CD4-positive, alpha-beta T cell (primary cell): ENCODE measurements at regions of chr5 and their contacts with region 1.

Region 1: GRCh38 chr5:172714491-172715421 is 56.2 kb downstream of the DUSP1 start:
- DNase-seq: peak; percentile 44 to 85 (median 62)
- ATAC-seq: peak; percentile 80
- H3K4me3 ChIP-seq: no peak overlapping the region
- H3K4me3 Mint-ChIP-seq: no peak overlapping the region
- H3K27ac ChIP-seq: no peak overlapping the region
- H3K27ac Mint-ChIP-seq: no peak overlapping the region
- H3K4me1 ChIP-seq: peaks cover 29% of the 10 kb centered on the region
- H3K4me1 Mint-ChIP-seq: peaks cover 8% of the 10 kb centered on the region
- H3K27me3 ChIP-seq: no peaks in the 10 kb centered on the region
- H3K27me3 Mint-ChIP-seq: peaks cover 5% of the 10 kb centered on the region
- CTCF ChIP-seq: peak; percentile 81

Region 2: GRCh38 chr5:172770675-172771438 is 56.1 kb after region 1 on chr5 and contains the start of gene DUSP1:
- CTCF ChIA-PET with region 1: interaction called, 38 read pairs
- POLR2A ChIA-PET with region 1: interaction called, 49 read pairs
- intact Hi-C with region 1: loop called (anchors 1 to 2 kb)
- DNase-seq: peak; percentile 96 to 100 (median 98)
- ATAC-seq: peak; percentile 45
- H3K4me3 ChIP-seq: peak within 1 kb of the TSS; percentile 95
- H3K4me3 Mint-ChIP-seq: peak within 1 kb of the TSS; percentile 99
- H3K27ac ChIP-seq: peak within 1 kb of the TSS; percentile 100
- H3K27ac Mint-ChIP-seq: peak within 1 kb of the TSS; percentile 95
- H3K4me1 ChIP-seq: peaks cover 87% of the 10 kb centered on the region
- H3K4me1 Mint-ChIP-seq: peaks cover 78% of the 10 kb centered on the region
- H3K27me3 ChIP-seq: no peaks in the 10 kb centered on the region
- H3K27me3 Mint-ChIP-seq: peaks cover 6% of the 10 kb centered on the region
- CTCF ChIP-seq: peak; percentile 33
- total RNA-seq, gene DUSP1: 761 to 768 TPM

Region 3: GRCh38 chr5:172833686-172834414 is 119.1 kb after region 1 on chr5 and contains the start of gene ERGIC1:
- CTCF ChIA-PET with region 1: interaction called, 4 read pairs
- POLR2A ChIA-PET with region 1: no interaction called
- intact Hi-C with region 1: loop called (anchors 5 kb)
- DNase-seq: peak; percentile 17 to 83 (median 52)
- ATAC-seq: peak; percentile 66
- H3K4me3 ChIP-seq: peak within 1 kb of the TSS; percentile 83
- H3K4me3 Mint-ChIP-seq: peak within 1 kb of the TSS; percentile 95
- H3K27ac ChIP-seq: peak within 1 kb of the TSS; percentile 41 to 78
- H3K27ac Mint-ChIP-seq: peak within 1 kb of the TSS; percentile 88
- H3K4me1 ChIP-seq: peaks cover 49% of the 10 kb centered on the region
- H3K4me1 Mint-ChIP-seq: peaks cover 45% of the 10 kb centered on the region
- H3K27me3 ChIP-seq: no peaks in the 10 kb centered on the region
- H3K27me3 Mint-ChIP-seq: no peaks in the 10 kb centered on the region
- CTCF ChIP-seq: no peak
- total RNA-seq, gene ERGIC1: 51.0 to 52.4 TPM

Region 4: DNA sequence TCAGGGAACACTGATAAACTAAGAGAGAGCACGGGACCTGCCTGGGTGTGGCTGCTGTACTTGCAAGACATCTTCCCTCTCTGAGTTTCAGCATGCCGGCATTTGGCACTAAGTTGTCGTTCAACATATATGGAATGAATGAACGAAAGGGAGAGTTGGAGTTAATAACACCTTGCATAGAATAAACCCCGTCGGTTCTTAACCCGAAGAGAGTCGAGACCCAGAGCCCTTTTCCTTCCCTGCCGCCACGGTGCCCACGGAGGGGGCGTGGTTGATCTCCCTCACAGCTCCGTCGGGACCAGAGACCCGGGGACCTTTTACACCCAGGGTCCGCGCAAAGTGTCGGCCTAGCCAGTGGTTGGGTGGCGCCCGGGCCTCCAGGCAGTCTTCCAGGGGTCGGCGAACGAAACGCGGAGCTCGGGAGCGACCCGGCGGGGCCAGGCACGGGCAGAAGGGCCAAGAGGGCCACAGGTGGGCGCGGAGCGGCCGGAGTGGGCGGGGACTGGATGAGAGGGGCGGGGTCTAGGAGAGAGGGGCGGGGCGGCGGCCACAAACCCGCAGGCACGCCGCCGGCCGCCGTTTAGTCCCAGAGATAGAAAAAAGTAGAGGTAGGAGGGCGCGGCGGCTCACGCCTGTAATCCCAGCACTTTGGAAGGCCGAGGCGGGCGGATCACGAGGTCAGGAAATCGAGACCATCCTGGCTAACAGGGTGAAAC is 243.7 kb after region 1 on chr5:
- CTCF ChIA-PET with region 1: interaction called, 11 read pairs
- POLR2A ChIA-PET with region 1: interaction called, 5 read pairs
- intact Hi-C with region 1: no loop called
- DNase-seq: peak; percentile 35 to 83 (median 56)
- ATAC-seq: peak; percentile 49
- H3K4me3 ChIP-seq: peak overlapping the region; percentile 93
- H3K4me3 Mint-ChIP-seq: peak overlapping the region; percentile 97
- H3K27ac ChIP-seq: peak overlapping the region; percentile 59 to 76
- H3K27ac Mint-ChIP-seq: peak overlapping the region; percentile 96
- H3K4me1 ChIP-seq: peaks cover 21% of the 10 kb centered on the region
- H3K4me1 Mint-ChIP-seq: peaks cover 44% of the 10 kb centered on the region
- H3K27me3 ChIP-seq: no peaks in the 10 kb centered on the region
- H3K27me3 Mint-ChIP-seq: no peaks in the 10 kb centered on the region
- CTCF ChIP-seq: no peak

Region 5: DNA sequence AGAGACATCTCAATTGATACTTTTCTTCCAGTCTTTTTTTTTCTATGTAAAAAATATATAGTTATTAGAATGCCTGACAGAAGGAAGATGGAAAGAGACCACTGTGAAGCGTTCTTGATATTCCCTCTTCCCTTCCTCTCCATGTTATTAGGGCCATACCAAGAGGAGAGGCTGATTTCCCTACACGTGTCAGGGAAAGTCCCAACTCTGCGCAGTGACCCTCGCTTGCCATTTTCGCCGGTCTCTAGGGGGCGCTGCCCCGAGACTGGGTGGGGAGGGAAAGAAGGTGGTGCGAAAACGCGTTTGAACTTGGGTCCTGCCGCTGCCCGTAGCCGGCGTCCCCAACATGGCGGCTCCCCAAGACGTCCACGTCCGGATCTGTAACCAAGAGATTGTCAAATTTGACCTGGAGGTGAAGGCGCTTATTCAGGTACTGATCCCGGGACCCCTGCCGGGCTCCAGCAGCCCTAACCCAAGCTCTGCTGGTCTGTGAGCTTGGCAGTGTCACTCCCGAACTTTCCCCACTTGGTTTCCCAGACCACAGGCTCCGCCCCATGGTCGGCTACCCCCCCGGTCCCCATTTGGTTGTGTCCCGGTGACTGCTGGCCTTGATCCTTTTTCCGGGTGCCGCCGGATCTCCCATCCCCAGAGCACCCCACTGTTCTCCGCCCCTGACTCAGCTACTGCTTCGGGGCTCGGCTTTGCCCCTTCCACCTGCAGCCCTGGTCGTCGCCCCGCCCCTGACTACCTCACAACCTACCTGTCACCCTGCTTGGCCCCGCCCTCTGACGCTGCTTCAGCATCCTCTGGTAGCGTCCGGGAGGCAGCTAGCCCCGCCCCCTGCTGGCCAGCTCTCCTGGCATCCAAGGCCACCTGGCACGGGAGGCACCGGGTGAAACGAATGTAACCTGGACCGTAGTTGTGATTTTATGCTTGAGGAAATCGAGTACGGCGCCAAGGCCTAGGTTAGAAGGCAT is 429.7 kb after region 1 on chr5 and contains the start of gene BNIP1:
- CTCF ChIA-PET with region 1: no interaction called
- POLR2A ChIA-PET with region 1: no interaction called
- intact Hi-C with region 1: loop called in 1 of 2 experiments (anchors 5 kb)
- DNase-seq: peak; percentile 90 to 99 (median 97)
- ATAC-seq: peak; percentile 93
- H3K4me3 ChIP-seq: peak within 1 kb of the TSS; percentile 90
- H3K4me3 Mint-ChIP-seq: peak within 1 kb of the TSS; percentile 98
- H3K27ac ChIP-seq: peak within 1 kb of the TSS; percentile 97 to 99
- H3K27ac Mint-ChIP-seq: peak within 1 kb of the TSS; percentile 100
- H3K4me1 ChIP-seq: peaks cover 8% of the 10 kb centered on the region
- H3K4me1 Mint-ChIP-seq: peaks cover 13% of the 10 kb centered on the region
- H3K27me3 ChIP-seq: no peaks in the 10 kb centered on the region
- H3K27me3 Mint-ChIP-seq: no peaks in the 10 kb centered on the region
- CTCF ChIP-seq: peak; percentile 90
- total RNA-seq, gene BNIP1: 22.5 to 24.4 TPM

Region 6: DNA sequence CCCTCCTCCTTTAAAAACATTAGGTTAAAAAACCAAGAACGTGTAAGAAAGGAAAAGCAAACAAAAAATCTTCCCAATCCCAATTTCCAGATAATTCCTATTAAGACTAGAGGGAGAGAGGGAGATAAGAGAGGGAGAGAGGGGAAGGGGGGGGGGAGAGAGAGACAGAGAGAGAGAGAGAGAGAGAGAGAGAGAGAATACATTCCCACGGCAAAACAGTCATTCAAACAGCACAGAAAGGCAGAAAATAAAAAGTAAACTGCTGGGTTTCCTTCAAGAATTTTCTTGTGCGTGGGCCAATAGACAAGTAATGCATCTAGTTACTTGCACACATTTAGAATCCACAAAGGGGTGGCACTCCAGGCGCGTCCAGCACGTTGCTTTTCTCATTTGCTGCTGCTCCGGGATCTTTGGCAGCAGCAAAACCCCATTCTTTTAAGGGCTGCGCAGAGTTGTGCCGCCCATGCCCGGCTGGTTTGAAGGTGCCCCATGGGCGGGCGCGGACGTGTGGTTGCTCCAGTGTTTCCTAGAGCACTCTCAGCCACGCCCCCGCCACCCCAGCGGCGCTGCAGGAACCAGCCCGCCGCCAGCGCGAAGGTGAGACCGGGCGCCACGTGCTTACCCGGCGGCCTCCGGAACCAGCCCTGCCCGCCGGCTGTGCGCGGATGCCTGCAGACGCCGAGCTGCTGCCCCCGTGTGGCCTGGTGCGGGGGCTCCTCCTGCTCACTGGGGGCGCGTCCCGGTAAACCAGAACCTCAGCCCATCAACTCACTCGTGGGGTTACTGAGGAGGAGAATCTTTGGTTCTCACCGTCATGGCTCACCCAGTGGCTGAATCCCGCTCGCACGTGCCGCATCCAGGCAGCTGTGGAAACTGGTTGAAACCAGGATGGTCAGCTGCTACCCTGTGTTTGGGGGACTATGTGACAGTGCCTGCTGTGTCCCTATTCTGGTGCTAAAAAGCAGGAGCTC is 568.8 kb after region 1 on chr5:
- CTCF ChIA-PET with region 1: no interaction called
- POLR2A ChIA-PET with region 1: no interaction called
- intact Hi-C with region 1: loop called in 1 of 2 experiments (anchors 10 kb)
- DNase-seq: peak; percentile 42 to 79 (median 62)
- ATAC-seq: peak; percentile 97
- H3K4me3 ChIP-seq: no peak overlapping the region
- H3K4me3 Mint-ChIP-seq: peak overlapping the region; percentile 20
- H3K27ac ChIP-seq: no peak overlapping the region
- H3K27ac Mint-ChIP-seq: no peak overlapping the region
- H3K4me1 ChIP-seq: peaks cover 10% of the 10 kb centered on the region
- H3K4me1 Mint-ChIP-seq: no peaks in the 10 kb centered on the region
- H3K27me3 ChIP-seq: peaks cover 33 to 37% of the 10 kb centered on the region in 2 experiments
- H3K27me3 Mint-ChIP-seq: peaks cover 89% of the 10 kb centered on the region
- CTCF ChIP-seq: peak; percentile 53

Region 7: DNA sequence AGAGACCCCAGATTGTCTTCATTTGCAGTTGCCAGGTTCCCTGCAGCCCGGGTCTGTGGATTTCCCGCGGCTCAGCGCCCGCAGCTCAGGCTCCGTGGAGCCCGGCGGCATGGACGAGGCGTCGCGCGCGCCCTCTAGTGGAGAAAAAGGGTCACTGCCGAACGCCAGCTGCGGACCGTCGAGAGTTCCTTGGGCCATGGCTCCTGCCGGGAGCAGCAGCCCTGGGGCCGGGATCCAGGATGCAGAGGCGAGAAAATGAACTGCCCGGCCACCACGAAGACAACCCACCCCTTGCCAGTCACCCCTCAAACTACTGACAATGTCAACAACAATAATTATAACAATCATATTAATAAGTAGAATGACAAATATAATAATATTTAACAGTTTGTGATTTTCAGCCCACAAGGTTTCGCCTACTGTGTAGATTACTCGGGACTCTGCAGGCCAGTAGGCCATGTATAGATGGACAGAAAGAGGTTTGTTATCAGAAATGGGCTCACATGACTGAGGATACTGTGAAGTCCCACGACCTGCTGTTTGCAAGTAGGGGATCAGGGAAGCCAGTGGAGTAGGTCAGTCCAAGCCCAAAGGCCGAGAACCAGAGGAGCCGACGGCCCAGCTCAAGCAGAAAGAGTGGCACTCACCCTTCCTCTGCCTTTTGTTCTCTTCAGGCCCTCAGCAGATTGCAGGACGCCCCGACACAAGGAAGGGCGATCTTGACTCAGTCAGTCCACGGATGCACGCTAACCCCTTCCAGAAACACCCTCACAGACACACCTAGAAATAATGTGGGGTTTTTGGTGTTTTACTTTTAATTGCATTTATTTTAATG is 858.6 kb after region 1 on chr5:
- CTCF ChIA-PET with region 1: no interaction called
- POLR2A ChIA-PET with region 1: no interaction called
- intact Hi-C with region 1: loop called in 1 of 2 experiments (anchors 5 kb)
- DNase-seq: peak; percentile 35 to 76 (median 52)
- ATAC-seq: peak; percentile 73
- H3K4me3 ChIP-seq: no peak overlapping the region
- H3K4me3 Mint-ChIP-seq: no peak overlapping the region
- H3K27ac ChIP-seq: no peak overlapping the region
- H3K27ac Mint-ChIP-seq: no peak overlapping the region
- H3K4me1 ChIP-seq: peaks cover 8% of the 10 kb centered on the region
- H3K4me1 Mint-ChIP-seq: peaks cover 7% of the 10 kb centered on the region
- H3K27me3 ChIP-seq: peaks cover 8 to 16% of the 10 kb centered on the region in 2 experiments
- H3K27me3 Mint-ChIP-seq: peaks cover 16% of the 10 kb centered on the region
- CTCF ChIP-seq: peak; percentile 93